ENCODE measurements at regions of chr5 and their contacts with region 1.

Region 1: DNA sequence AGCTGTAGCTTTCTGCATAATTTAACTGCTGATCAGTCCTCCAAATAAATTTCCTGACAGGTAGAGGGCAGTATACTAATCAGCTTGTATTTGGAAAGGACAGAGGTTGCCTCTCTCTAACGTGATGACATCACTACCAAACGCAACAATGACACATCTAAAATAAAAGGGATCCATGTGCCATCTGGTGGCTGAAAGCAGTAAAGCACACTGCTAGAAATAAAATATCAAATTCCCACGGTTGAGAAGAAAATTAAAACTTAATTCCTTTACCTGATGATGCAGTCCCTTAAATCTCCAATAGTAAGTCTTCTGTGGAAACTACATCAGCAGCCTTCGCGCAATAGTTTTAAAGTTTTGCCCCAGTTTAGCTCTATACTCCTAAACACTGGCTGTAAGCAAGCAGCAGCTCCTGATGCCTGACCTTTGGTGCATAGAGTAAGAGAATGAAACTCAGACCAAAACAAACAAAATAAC is 54.5 kb downstream of the DIAPH1 start:
- DNase-seq: peak; percentile 80
- H3K4me3 Mint-ChIP-seq: no peak overlapping the region
- H3K27ac Mint-ChIP-seq: peak overlapping the region; percentile 77
- H3K4me1 Mint-ChIP-seq: peaks cover 22% of the 10 kb centered on the region
- H3K27me3 Mint-ChIP-seq: no peaks in the 10 kb centered on the region

Region 2: DNA sequence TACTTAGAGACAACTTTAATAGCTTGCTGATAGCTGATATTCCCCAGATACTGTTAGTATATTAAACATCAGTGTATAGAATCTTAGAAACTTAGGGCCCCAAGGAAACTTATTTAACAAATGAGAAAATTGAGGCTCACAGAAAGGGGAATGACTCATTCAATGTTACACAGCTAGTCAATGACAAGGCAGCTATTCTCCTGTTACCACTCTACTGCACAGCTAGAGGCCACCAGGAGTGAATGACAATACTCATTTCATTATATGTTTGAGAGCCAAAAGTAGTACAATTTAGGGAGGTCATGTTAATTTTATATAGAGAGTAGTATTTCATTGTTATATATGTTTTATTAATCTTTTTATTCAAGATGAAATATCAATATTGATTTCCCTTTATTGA is 546.3 kb before region 1 on chr5:
- CTCF ChIA-PET with region 1: no interaction called
- intact Hi-C with region 1: no loop called
- DNase-seq: no peak
- H3K4me3 Mint-ChIP-seq: no peak overlapping the region
- H3K27ac Mint-ChIP-seq: no peak overlapping the region
- H3K4me1 Mint-ChIP-seq: no peaks in the 10 kb centered on the region
- H3K27me3 Mint-ChIP-seq: peaks cover 4% of the 10 kb centered on the region

Region 3: DNA sequence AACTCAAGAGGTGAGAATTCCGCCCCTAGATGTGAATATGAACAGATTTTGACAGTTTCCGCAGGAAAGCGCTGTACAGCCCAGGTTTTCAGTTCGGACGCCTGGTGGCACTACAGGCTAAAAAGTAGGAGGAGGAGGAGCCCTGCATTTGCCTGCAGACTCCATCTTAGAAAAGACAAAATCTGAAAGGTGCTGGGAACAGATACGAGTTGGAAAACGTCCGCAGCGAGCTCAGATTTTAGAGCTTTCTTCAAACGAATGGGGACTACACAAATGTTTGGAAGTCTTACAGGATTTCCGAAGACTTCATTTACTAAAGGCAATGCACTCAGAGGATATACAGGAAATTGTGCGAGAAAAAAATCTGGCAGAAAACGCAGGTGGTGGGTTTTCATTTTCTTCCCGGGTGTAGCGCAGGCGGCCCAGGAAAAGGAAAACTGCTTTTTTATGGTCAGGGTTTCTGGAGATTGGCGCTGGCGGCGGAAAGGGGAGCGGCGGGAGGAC is 479.7 kb before region 1 on chr5:
- CTCF ChIA-PET with region 1: no interaction called
- intact Hi-C with region 1: loop called (anchors 1 kb)
- DNase-seq: peak; percentile 77
- H3K4me3 Mint-ChIP-seq: peak overlapping the region; percentile 85
- H3K27ac Mint-ChIP-seq: no peak overlapping the region
- H3K4me1 Mint-ChIP-seq: peaks cover 6% of the 10 kb centered on the region
- H3K27me3 Mint-ChIP-seq: peaks cover 23% of the 10 kb centered on the region

Region 4: DNA sequence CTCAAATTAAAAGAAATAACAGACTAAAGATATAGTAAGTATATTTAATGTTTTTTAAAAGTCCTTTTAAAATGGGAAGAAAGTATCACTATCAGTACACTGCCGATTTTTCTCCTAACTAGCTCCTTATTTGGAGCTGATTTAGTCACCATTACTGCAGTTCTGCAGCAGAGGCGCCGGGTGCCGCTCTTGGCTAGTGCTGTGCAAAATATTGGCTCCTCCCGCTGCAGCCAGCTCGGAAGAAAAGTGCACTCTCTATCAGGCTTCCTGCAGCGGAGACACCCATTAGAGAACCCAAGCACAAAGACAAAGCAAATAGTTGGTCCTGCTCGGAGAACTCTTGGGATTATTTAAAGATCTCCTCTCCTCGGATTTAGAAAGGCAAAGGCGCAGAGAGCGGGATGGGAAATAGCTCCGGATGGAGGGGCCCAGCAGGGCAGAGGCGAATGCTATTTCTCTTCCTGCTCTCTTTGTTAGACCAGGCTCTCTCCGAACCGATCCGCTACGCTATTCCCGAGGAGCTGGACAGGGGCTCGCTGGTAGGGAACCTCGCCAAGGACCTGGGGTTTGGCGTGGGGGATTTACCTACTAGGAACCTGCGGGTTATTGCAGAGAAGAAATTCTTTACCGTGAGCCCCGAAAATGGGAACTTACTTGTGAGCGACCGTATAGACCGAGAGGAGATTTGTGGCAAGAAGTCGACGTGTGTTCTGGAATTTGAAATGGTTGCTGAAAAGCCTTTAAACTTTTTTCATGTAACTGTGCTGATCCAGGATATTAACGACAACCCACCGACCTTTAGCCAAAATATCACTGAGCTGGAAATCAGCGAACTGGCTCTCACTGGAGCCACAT is 194.0 kb before region 1 on chr5 and contains the start of gene PCDHGB3:
- CTCF ChIA-PET with region 1: interaction called, 6 read pairs
- intact Hi-C with region 1: loop called (anchors 1 kb)
- DNase-seq: peak; percentile 47
- H3K4me3 Mint-ChIP-seq: peak within 1 kb of the TSS; percentile 69
- H3K27ac Mint-ChIP-seq: no peak within 1 kb of the TSS
- H3K4me1 Mint-ChIP-seq: peaks cover 4% of the 10 kb centered on the region
- H3K27me3 Mint-ChIP-seq: peaks cover 68% of the 10 kb centered on the region
- total RNA-seq, gene PCDHGB3: 0.07 TPM in 1 of 2 experiments, not detected in the other

Region 5: DNA sequence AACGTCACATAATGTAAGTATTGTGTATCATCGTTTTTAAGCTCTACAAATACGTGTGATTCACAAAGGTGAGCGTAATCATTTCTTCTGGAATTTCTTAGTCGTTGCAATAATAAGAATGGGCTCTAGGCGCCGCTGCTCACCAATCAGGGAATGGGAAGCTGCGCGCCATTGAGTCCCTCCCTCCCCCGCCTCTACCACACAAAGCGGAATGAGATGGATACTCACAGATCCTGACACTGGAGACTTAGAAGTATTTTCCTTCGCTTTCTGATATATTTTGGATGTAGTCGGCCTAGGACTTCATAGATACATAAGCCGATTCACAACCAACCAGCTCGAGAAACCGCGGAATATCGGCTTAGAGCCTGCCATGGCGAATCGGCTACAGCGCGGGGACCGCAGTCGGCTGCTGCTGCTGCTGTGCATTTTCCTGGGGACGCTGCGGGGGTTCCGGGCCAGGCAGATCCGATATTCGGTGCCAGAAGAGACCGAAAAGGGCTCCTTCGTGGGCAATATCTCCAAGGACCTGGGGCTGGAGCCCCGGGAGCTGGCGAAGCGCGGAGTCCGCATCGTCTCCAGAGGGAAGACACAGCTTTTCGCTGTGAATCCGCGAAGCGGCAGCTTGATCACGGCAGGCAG is 143.3 kb before region 1 on chr5 and contains the start of gene PCDHGA11:
- CTCF ChIA-PET with region 1: interaction called, 13 read pairs
- intact Hi-C with region 1: loop called (anchors 1 kb)
- DNase-seq: peak; percentile 71
- H3K4me3 Mint-ChIP-seq: peak within 1 kb of the TSS; percentile 77
- H3K27ac Mint-ChIP-seq: no peak within 1 kb of the TSS
- H3K4me1 Mint-ChIP-seq: peaks cover 3% of the 10 kb centered on the region
- H3K27me3 Mint-ChIP-seq: peaks cover 69% of the 10 kb centered on the region
- total RNA-seq, gene PCDHGA11: 0.10 to 0.17 TPM

Region 6: GRCh38 chr5:141475625-141476131 is 88.6 kb before region 1 on chr5 and contains the start of gene PCDHGC3:
- CTCF ChIA-PET with region 1: interaction called, 7 read pairs
- intact Hi-C with region 1: loop called (anchors 2 kb)
- DNase-seq: peak; percentile 72
- H3K4me3 Mint-ChIP-seq: peak within 1 kb of the TSS; percentile 86
- H3K27ac Mint-ChIP-seq: no peak within 1 kb of the TSS
- H3K4me1 Mint-ChIP-seq: peaks cover 20% of the 10 kb centered on the region
- H3K27me3 Mint-ChIP-seq: peaks cover 50% of the 10 kb centered on the region
- total RNA-seq, gene PCDHGC3: 0.12 to 0.17 TPM

Region 7: GRCh38 chr5:141524604-141525597 is 39.4 kb before region 1 on chr5:
- CTCF ChIA-PET with region 1: interaction called, 12 read pairs
- intact Hi-C with region 1: no loop called
- DNase-seq: peak; percentile 57
- H3K4me3 Mint-ChIP-seq: no peak overlapping the region
- H3K27ac Mint-ChIP-seq: no peak overlapping the region
- H3K4me1 Mint-ChIP-seq: peaks cover 32% of the 10 kb centered on the region
- H3K27me3 Mint-ChIP-seq: no peaks in the 10 kb centered on the region

Region 8: GRCh38 chr5:141636413-141637122 is 72.3 kb after region 1 on chr5 and contains the starts of genes HDAC3 and RELL2:
- CTCF ChIA-PET with region 1: interaction called, 10 read pairs
- intact Hi-C with region 1: loop called (anchors 1 kb)
- DNase-seq: peak; percentile 94
- H3K4me3 Mint-ChIP-seq: peak within 1 kb of the TSS; percentile 93
- H3K27ac Mint-ChIP-seq: peak within 1 kb of the TSS; percentile 87
- H3K4me1 Mint-ChIP-seq: peaks cover 51% of the 10 kb centered on the region
- H3K27me3 Mint-ChIP-seq: no peaks in the 10 kb centered on the region
- total RNA-seq, gene HDAC3: 52.1 to 55.6 TPM
- total RNA-seq, gene RELL2: 20.9 to 21.1 TPM

Region 9: DNA sequence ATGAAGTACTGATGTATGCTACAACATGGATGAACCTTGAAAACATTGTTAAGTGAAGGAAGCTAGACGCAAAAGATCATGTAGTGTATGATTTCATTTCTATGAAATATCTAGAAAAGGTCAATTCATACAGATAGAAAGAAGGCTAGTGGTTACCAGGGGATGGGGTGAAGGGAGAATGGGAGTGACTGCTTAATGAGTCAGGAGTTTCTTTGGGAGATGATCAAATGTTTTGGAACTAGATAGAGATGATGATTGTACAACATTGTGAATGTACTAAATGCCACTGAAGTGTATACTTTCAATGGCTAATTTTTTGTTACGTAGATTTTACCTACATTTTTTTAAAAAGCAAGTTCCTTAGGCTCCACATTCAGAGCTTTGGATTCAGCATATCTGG is 344.5 kb after region 1 on chr5:
- CTCF ChIA-PET with region 1: no interaction called
- intact Hi-C with region 1: no loop called
- DNase-seq: no peak
- H3K4me3 Mint-ChIP-seq: no peak overlapping the region
- H3K27ac Mint-ChIP-seq: no peak overlapping the region
- H3K4me1 Mint-ChIP-seq: peaks cover 5% of the 10 kb centered on the region
- H3K27me3 Mint-ChIP-seq: peaks cover 13% of the 10 kb centered on the region

Region 10: GRCh38 chr5:141934099-141934844 is 370.0 kb after region 1 on chr5:
- CTCF ChIA-PET with region 1: no interaction called
- intact Hi-C with region 1: no loop called
- DNase-seq: no peak
- H3K4me3 Mint-ChIP-seq: no peak overlapping the region
- H3K27ac Mint-ChIP-seq: no peak overlapping the region
- H3K4me1 Mint-ChIP-seq: no peaks in the 10 kb centered on the region
- H3K27me3 Mint-ChIP-seq: no peaks in the 10 kb centered on the region

Measured in activated naive CD4-positive, alpha-beta T cell treated with anti-CD3 and anti-CD28 coated beads for 36 hours (primary cell).